ENCODE measurements at regions of chr5 and their contacts with region 1.

Region 1: DNA sequence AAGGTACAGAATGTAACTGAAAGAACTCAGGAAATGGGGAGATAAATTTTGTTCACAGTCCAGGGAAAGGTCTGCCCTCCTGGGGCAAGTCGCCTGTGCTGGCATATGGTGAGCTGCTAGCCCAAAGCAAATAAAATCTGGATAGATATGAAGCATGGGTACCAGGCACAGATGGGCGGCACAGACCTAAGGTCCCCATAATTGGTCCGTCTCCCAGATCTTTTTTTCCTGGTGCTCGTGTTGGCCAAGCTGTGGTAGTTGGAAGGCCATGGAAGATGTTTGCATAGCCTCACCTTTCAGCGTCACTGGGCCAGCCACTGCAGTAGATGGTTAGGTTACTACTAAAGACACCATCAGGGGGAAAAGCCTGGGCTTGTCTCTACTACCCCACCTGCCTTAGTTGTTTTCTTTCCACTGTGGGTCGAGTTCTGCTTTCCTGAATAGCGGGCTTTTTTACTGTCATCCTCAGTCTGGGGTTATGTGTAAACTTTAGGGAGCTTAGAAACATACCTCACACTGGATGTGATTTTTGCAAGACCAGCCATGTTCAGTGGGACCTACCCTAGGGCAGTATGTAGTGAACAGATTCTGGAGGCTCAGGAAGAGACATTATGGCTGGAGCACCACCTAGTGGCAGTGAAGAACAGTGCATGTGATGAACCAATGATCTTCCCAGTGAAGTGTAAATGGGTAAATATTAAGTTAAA is 24.2 kb upstream of the GLRX start:
- DNase-seq: peak in 1 of 2 donors; percentile 90
- H3K4me3 ChIP-seq: no peak overlapping the region
- CTCF ChIP-seq: peak in 1 of 3 donors; percentile 82
- POLR2A ChIP-seq: no peak

Region 2: GRCh38 chr5:95655575-95655974 is 191.1 kb before region 1 on chr5:
- intact Hi-C with region 1: loop called (anchors 5 kb)
- DNase-seq: no peak
- H3K4me3 ChIP-seq: no peak overlapping the region
- CTCF ChIP-seq: no peak
- POLR2A ChIP-seq: no peak

Region 3: GRCh38 chr5:95730730-95731570 is 115.8 kb before region 1 on chr5 and contains the start of gene RHOBTB3:
- intact Hi-C with region 1: no loop called
- DNase-seq: peak; percentile 88 to 97
- H3K4me3 ChIP-seq: peak within 1 kb of the TSS; percentile 88
- CTCF ChIP-seq: no peak
- POLR2A ChIP-seq: peak in 1 of 2 donors; percentile 33
- total RNA-seq, gene RHOBTB3: 16.7 to 39.4 (median 28.2) TPM

Region 4: DNA sequence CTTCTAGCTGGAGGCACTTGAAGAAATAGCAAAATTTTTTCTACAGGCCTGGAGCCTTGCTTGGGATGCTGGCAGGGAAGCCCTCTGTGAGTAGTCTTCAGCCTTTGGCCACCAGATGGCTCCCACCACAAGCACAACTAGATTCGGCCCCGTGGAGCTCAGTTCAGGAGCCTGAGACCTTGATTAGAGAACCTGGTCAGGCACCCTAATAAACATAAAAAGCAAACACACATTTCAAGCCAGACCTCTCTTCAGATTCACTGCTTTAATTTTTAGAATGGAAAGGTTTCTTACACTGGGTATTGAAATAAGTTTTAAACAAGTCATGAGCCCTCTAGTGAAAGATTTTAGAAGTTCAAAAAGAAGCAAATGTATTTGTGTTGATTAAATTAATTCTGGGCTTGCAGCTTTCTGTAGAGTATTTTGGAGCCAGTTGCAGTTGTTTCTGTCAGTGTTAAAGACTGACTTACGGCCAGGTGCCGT is 65.6 kb before region 1 on chr5:
- intact Hi-C with region 1: loop called (anchors 2 kb)
- DNase-seq: peak; percentile 79 to 95
- H3K4me3 ChIP-seq: no peak overlapping the region
- CTCF ChIP-seq: peak in 1 of 3 donors; percentile 69
- POLR2A ChIP-seq: no peak

Region 5: DNA sequence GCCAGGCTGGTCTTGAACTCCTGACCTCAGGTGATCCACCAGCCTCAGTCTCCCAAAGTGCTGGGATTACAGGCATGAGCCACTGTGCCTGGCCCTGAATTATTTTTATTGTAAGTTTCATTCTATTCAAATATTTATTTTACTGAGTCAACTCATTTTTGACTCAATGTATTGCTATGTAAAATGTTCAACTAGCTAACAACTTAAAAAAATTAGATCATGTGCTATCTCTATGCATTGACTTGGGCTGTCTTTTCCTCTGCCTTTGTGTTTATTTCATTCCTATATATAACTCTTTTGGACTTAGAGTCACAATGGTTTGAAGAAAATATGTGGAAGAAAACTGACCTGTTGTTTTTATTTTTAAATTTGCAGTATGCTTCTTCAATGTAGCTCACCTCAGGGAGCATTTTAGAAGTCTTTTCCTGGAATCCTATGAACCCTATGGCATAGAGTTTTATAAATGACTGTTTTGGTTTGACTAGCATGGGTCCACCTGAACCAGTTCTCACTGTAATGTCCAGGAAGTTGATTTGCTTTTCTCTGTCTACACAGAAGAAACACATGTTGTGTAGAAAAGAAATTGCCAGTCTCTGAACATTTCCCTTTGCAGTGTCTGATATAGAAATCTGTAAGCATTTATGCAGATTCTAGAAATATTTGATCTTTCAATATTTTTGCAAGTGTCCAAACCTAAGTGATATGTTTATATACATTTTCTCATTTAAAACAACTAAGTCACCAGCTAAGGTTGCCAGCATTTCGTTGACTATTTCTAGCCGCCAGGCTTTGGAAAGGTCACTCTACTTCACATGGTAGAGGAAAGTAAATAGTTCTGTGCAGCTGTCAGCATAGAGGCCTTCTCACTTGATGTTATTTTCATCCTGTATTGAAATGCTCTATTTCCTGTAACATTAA is 447.5 kb after region 1 on chr5:
- intact Hi-C with region 1: no loop called
- DNase-seq: no peak
- H3K4me3 ChIP-seq: no peak overlapping the region
- CTCF ChIP-seq: no peak
- POLR2A ChIP-seq: no peak

Measured in lower leg skin (tissue), 4 donors.